PC-3 (cell line): ENCODE measurements at regions of chrX and their contacts with region 1.

Region 1: GRCh38 chrX:129925305-129926092 is 19.5 kb downstream of the UTP14A start:
- DNase-seq: peak; percentile 69
- ATAC-seq: peak; percentile 80
- H3K4me3 ChIP-seq: no peak overlapping the region
- H3K27ac ChIP-seq: no peak overlapping the region
- H3K4me1 ChIP-seq: no peaks in the 10 kb centered on the region
- H3K27me3 ChIP-seq: no peaks in the 10 kb centered on the region
- CTCF ChIP-seq: peak; percentile 71

Region 2: GRCh38 chrX:130028196-130028595 is 102.7 kb after region 1 on chrX:
- CTCF ChIA-PET with region 1: interaction called, 4 read pairs
- POLR2A ChIA-PET with region 1: interaction called, 4 read pairs
- intact Hi-C with region 1: loop called (anchors 1 kb)
- DNase-seq: peak; percentile 54
- ATAC-seq: peak; percentile 42; the same call in 1 of the 2 replicates
- H3K4me3 ChIP-seq: no peak overlapping the region
- H3K27ac ChIP-seq: no peak overlapping the region
- H3K4me1 ChIP-seq: no peaks in the 10 kb centered on the region; the same call in 1 of the 2 replicates
- H3K27me3 ChIP-seq: no peaks in the 10 kb centered on the region
- CTCF ChIP-seq: peak; percentile 83

Region 3: DNA sequence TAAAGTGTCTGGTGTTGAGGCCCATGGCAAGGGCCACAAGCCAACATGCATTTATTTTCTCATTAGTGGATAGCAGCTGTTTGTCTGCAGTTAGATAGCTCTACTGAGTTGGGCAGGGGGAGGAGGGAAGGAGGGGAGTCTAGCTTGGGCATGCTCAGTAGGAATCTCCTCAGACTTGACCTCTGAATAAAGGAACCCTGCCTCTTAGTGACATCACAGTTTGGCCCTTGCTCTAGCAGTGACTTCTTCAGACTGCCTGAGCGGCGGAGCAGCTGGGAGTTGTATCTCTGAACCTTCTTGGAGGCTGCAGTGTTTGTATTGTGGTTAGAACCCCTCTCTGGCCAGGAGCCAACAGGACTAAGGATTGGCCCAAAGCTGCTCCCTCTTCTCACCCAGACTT is 114.3 kb after region 1 on chrX:
- CTCF ChIA-PET with region 1: no interaction called
- POLR2A ChIA-PET with region 1: no interaction called
- intact Hi-C with region 1: no loop called
- DNase-seq: no peak
- ATAC-seq: no peak
- H3K4me3 ChIP-seq: no peak overlapping the region
- H3K27ac ChIP-seq: no peak overlapping the region
- H3K4me1 ChIP-seq: no peaks in the 10 kb centered on the region
- H3K27me3 ChIP-seq: no peaks in the 10 kb centered on the region
- CTCF ChIP-seq: no peak

Region 4: GRCh38 chrX:130060122-130061069 is 134.9 kb after region 1 on chrX:
- CTCF ChIA-PET with region 1: interaction called, 9 read pairs
- POLR2A ChIA-PET with region 1: no interaction called
- intact Hi-C with region 1: loop called (anchors 5 kb)
- DNase-seq: peak; percentile 86
- ATAC-seq: peak; percentile 88
- H3K4me3 ChIP-seq: peak overlapping the region; percentile 68
- H3K27ac ChIP-seq: no peak overlapping the region
- H3K4me1 ChIP-seq: peaks cover 5% of the 10 kb centered on the region; the same call in 1 of the 2 replicates
- H3K27me3 ChIP-seq: no peaks in the 10 kb centered on the region
- CTCF ChIP-seq: peak; percentile 79

Region 5: DNA sequence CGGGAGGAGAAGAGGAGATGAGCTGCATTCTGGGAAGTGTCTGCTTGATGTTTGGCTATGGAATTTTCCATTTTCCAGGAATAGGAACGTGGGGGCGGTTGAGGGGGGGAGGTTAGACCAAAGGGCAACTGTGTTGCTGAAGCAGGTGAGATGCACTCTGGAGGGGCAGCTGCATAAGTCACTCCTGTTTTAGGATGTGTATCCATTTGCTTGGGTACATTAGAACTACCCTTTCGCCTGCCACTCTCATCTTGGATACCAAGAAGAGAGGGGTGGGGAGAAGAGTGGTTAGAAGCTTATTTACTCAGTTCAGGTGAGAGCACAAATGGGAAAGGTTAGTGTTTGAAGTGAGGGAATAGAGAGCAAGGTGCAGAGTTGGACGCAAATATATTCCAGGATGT is 460.9 kb after region 1 on chrX:
- CTCF ChIA-PET with region 1: interaction called, 10 read pairs
- POLR2A ChIA-PET with region 1: no interaction called
- intact Hi-C with region 1: no loop called
- DNase-seq: no peak
- ATAC-seq: no peak
- H3K4me3 ChIP-seq: no peak overlapping the region
- H3K27ac ChIP-seq: no peak overlapping the region
- H3K4me1 ChIP-seq: no peaks in the 10 kb centered on the region
- H3K27me3 ChIP-seq: no peaks in the 10 kb centered on the region
- CTCF ChIP-seq: no peak